Dorsolateral prefrontal cortex (tissue), 120 donors: ENCODE measurements at regions of chr17 and their contacts with region 1.

Region 1: DNA sequence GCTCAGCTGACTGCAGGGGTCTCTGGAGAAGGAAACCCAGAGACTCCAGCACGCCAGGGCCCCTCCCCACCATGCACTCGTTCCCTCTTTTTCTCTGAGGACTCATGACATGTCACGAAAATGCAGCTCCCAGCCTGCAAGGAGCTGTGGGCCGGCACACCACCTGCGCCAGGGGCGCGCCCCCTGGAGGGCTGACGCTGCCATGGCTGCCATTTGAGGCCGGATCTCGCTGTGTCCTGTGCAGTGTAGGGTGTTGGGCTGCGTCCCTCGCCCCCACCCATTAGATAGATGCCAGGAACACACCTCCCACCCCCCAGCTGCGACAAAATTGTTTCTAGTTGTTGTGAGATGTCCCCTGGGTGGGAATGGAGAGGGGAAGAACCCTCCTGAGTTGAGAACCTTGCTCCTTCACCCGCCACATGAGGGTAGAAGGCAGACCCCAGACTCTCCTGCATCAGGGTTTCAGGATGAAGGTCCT is 8.2 kb downstream of the SYNGR2 start:
- DNase-seq: peak in 8 of 10 donors; percentile 54 to 81 (median 66)
- H3K4me3 ChIP-seq: no peak overlapping the region
- H3K27ac ChIP-seq: peak overlapping the region in 51 of 59 donors; percentile 16 to 98 (median 94)
- H3K27me3 ChIP-seq: no peaks in the 10 kb centered on the region
- CTCF ChIP-seq: peak; percentile 43 to 88 (median 76)

Region 2: DNA sequence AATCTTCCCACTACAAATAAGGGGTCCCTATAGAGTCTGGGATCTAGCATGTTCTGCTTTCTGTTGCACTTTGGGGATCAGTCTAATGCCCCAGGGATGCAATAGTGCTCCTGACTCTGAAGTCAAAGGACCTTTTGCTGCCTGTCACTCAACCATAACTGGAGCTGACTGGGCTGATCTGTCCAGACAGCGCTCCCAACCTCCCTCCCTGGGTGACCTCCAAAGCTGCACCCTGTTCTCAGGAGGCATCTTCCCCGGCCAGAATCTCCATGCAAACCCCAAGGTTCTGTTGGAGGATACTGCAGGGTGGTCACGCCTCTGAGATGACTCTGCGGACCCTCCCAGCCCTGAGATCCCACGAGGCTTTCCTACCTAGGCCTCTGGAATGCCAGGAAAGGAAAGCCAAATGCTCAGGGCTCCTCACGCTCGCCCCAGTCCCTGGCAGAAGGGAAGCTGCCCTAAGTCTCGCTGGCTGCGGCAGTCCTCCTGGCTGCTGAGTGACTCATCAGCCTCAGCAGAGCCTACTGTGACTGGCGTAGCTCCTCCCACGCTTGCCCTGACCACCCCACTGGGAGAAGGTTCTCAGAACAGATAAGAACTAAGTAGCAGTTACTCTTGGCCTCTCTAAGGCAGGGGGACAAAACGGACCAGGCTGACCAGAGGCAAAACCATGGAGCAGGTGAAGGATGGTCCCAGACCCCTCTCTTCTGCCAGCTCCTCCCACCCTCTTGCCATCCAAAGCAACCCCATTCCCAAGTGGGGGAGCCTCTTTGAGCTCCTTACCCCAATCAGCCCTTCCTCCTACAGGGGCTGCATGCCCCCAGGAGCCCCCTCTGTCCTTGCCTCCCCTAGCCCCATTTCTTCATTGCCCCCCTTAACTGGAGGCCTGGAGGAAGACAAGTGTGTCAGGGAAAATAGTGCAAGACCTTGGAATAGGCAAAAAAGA is 342.1 kb before region 1 on chr17:
- intact Hi-C with region 1: no loop called
- DNase-seq: peak in 8 of 10 donors; percentile 47 to 85 (median 66)
- H3K4me3 ChIP-seq: no peak overlapping the region
- H3K27ac ChIP-seq: peak overlapping the region in 9 of 59 donors; percentile 7 to 59 (median 38)
- H3K27me3 ChIP-seq: no peaks in the 10 kb centered on the region
- CTCF ChIP-seq: no peak

Region 3: GRCh38 chr17:77963441-77963840 is 213.1 kb before region 1 on chr17:
- intact Hi-C with region 1: no loop called
- DNase-seq: peak in 7 of 10 donors; percentile 52 to 80 (median 62)
- H3K4me3 ChIP-seq: peak overlapping the region in 34 of 59 donors; percentile 2 to 90 (median 75)
- H3K27ac ChIP-seq: peak overlapping the region in 38 of 59 donors; percentile 1 to 74 (median 44)
- H3K27me3 ChIP-seq: no peaks in the 10 kb centered on the region
- CTCF ChIP-seq: peak in 9 of 56 donors; percentile 5 to 40 (median 15)

Region 4: DNA sequence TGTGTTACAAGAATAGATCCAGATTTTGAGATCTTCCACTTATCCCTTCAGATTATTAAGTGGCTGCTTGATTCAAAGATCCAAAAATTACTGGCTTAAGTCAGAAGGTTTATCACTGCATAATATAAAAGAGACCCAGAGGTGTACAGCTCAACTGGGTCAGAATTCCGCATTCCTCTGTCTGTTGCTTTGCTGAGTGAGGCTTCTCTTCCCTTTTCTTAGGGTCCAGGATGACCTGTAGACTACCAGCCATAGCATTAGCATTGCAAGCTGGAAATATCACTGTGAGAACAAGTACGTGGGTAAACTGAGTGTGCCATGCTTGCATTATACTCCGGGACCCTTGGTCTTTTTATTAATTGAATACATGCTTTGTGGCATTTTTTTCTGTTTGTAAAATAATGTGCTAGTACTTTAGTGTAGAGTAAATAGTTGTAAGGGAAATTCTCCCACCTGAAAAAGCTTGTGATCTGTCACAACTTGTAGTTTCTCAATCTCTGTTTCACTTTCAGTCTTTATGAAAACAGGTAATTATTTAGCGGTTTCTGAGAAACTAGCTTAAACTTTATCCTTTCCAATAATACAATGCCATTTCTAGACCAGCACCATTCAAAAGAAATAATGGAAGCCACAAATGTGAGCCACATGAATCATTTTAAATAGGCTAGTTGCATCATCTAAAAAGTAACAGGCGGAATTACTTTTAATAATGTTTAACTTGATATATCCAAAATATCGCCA is 156.4 kb before region 1 on chr17:
- intact Hi-C with region 1: loop called in 1 of 2 experiments (anchors 10 kb)
- DNase-seq: no peak
- H3K4me3 ChIP-seq: no peak overlapping the region
- H3K27ac ChIP-seq: peak overlapping the region in 31 of 59 donors; percentile 0 to 83 (median 40)
- H3K27me3 ChIP-seq: no peaks in the 10 kb centered on the region
- CTCF ChIP-seq: no peak

Region 5: DNA sequence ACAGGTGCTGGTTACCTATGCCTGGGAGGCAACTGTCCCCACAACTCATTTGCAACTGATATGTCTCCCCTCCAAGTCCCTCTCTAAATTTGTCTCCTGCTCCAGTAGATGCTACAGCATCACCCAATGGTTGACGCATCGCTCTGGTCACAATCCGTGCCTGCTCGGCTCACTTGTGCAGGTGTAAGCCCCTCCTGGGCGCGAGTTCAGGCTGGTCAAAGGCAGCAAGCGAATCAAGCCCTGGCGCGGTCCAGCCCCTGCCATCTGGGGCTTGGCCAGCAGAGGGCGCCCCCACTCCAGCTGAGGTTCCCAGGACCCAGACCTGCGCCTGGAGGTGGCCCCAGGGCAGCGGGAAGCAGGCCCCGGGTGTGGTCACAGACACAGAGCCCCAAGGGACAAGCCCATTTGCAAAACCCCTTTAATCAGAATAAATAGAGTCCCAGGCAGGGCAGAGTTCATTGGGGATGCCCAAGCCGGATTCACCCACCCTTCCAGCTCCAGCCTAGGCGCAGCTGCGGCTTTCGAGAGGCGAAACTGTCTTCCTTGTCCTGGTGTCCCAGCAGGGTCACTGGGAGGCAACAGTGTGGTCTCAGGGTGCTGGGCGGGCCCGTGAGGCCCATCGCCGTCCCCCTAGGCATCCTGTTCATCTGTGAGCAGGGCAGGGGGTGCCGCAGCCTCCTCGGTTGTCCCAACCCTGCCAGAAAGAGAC is 63.9 kb before region 1 on chr17:
- intact Hi-C with region 1: loop called (anchors 2 to 5 kb)
- DNase-seq: peak; percentile 74 to 89 (median 82)
- H3K4me3 ChIP-seq: peak overlapping the region in 6 of 59 donors; percentile 2 to 24 (median 13)
- H3K27ac ChIP-seq: peak overlapping the region; percentile 77 to 100 (median 99)
- H3K27me3 ChIP-seq: no peaks in the 10 kb centered on the region
- CTCF ChIP-seq: peak; percentile 96 to 100 (median 100)

Region 6: GRCh38 chr17:78128551-78129350 is 47.8 kb before region 1 on chr17 and contains the start of gene TMC6:
- intact Hi-C with region 1: loop called in 1 of 2 experiments (anchors 5 kb)
- DNase-seq: no peak
- H3K4me3 ChIP-seq: peak within 1 kb of the TSS; percentile 39 to 94 (median 79)
- H3K27ac ChIP-seq: peak within 1 kb of the TSS; percentile 76 to 100 (median 99)
- H3K27me3 ChIP-seq: peaks cover 0 to 17% (median 0%) of the 10 kb centered on the region in 45 donors
- CTCF ChIP-seq: peak in 3 of 56 donors; percentile 11 to 37 (median 28)
- total RNA-seq, gene TMC6: 17.3 to 352 (median 81.1) TPM

Region 7: GRCh38 chr17:78250891-78251794 is 74.6 kb after region 1 on chr17:
- intact Hi-C with region 1: loop called (anchors 2 to 5 kb)
- DNase-seq: peak; percentile 75 to 90 (median 86)
- H3K4me3 ChIP-seq: peak overlapping the region in 40 of 59 donors; percentile 6 to 58 (median 29)
- H3K27ac ChIP-seq: peak overlapping the region in 58 of 59 donors; percentile 28 to 100 (median 83)
- H3K27me3 ChIP-seq: no peaks in the 10 kb centered on the region
- CTCF ChIP-seq: peak; percentile 98 to 100 (median 100)

Region 8: DNA sequence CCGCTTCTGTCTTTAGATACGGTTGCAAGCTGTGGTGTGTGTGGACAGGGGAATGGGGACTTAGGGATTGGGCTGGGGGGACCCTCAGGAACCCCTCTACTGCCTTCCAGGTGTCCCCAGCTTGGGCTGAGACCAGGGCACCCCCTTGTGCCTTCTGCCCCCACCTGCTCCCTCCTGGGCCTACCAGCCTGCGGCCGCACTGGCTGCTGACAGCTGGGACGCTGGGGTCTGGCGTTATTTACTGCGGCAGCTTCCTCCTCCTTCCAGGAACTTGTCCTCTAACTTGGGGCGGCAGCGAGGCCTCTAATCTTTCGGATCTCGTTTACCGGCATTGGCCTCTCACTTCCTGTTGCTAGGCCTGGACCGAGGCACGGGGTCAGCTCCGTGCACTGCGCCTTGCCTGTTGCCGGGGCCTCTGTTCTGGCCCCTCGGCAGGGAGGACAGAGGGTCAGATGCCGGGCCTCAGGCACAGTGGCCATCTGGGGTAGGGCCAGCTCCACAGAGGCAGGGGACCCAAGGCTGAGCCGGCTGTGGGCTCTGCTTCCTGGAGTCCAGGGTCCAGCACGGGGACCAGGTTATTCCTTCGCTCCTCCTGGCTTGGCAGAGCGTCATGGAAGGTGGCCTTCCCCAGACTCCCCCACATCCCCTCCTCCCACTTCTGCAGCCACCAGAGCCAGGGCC is 86.6 kb after region 1 on chr17:
- intact Hi-C with region 1: no loop called
- DNase-seq: no peak
- H3K4me3 ChIP-seq: no peak overlapping the region
- H3K27ac ChIP-seq: peak overlapping the region in 17 of 59 donors; percentile 5 to 71 (median 40)
- H3K27me3 ChIP-seq: no peaks in the 10 kb centered on the region
- CTCF ChIP-seq: no peak